CD4-positive, alpha-beta memory T cell (primary cell): ENCODE measurements at regions of chr17 and their contacts with region 1.

Region 1: GRCh38 chr17:81860756-81861518 is 602 bp upstream of the P4HB start:
- DNase-seq: peak; percentile 100
- H3K4me3 ChIP-seq: peak overlapping the region; percentile 0 to 60
- H3K4me3 Mint-ChIP-seq: peak overlapping the region; percentile 86 to 93 (median 91)
- H3K27ac ChIP-seq: peak overlapping the region; percentile 92
- H3K27ac Mint-ChIP-seq: peak overlapping the region; percentile 98 to 99 (median 98)
- H3K4me1 ChIP-seq: peaks cover 40% of the 10 kb centered on the region
- H3K4me1 Mint-ChIP-seq: peaks cover 17 to 58% (median 36%) of the 10 kb centered on the region in 4 donors
- H3K27me3 ChIP-seq: no peaks in the 10 kb centered on the region
- H3K27me3 Mint-ChIP-seq: peaks cover 0 to 6% of the 10 kb centered on the region in 2 donors

Region 2: DNA sequence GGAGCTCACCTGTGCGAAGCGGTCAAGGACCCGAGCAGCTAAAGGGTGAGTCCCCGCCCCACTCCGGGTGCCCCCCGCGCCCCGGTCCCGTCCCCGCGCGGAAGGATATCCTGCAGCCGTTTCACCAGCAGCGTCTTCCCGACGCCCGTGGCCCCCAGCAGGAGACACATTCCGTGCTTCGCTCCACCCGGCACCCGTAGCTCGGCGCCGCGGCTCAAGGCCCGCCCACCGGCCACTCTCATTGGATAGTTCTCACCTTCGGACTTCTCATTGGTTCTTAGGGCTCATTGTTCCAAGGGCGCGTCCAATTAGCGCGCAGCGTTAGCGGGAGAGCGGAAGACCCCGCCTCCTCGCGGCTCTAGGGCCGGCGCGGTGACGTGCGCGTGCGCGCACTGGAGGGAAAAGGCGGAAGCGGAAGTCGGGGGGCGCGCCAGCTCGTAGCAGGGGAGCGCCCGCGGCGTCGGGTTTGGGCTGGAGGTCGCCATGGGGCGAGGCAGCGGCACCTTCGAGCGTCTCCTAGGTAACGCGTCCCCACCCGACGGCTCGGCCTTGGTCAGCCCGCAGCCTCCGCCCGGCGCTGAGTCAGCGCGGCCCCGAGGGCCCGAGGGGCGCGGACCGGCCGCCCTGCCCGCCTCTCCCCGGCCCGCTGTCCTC is 177.2 kb before region 1 on chr17 and contains the starts of genes ARL16 and HGS:
- CTCF ChIA-PET with region 1: interaction called, 4 read pairs
- POLR2A ChIA-PET with region 1: interaction called, 10 read pairs
- intact Hi-C with region 1: no loop called
- DNase-seq: peak; percentile 97 to 98 (median 98)
- H3K4me3 ChIP-seq: peak within 1 kb of the TSS; percentile 80 to 93
- H3K4me3 Mint-ChIP-seq: peak within 1 kb of the TSS; percentile 94 to 99 (median 97)
- H3K27ac ChIP-seq: peak within 1 kb of the TSS; percentile 83
- H3K27ac Mint-ChIP-seq: peak within 1 kb of the TSS; percentile 84 to 99 (median 96)
- H3K4me1 ChIP-seq: peaks cover 31% of the 10 kb centered on the region
- H3K4me1 Mint-ChIP-seq: peaks cover 20 to 54% (median 27%) of the 10 kb centered on the region in 4 donors
- H3K27me3 ChIP-seq: no peaks in the 10 kb centered on the region
- H3K27me3 Mint-ChIP-seq: no peaks in the 10 kb centered on the region
- total RNA-seq, gene ARL16: 25.9 to 27.7 TPM
- total RNA-seq, gene HGS: 182 to 206 TPM

Region 3: DNA sequence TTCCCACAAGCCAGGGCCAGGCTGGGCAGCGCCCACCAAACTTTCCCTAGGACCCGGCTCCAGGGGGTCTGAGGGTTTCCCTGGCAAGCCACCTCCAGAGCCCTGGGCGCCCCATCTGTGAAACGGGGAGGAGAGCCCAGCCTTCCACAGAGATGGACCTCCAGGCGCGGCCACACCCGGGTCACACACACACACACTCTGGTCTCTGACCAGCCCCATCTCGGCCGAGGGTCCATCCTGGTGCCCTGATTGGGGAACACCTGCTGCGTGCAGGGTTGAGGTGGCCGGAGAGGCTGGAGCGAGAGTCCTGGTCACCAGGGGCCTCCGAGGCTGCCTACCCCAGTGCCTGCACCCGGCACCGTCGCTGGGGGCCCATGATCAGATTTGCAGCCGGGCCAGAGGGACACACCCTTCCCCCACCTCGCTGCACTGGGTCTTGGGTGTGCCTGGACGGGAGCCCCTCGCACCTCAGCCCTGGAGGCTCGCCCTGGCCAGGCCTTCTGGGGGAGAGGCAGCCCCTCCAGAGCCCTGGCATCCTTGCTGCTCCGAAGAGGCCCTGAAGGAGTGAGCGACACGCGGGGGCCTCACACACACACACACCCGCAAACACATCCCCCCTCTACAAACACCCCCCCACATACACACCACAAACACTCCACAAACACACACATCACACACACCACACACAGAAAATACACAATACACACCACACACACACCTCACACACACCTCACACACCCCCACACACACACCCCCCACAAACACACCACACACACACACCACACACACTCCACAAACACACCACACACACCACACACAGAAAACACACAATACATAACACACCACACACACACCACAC is 119.1 kb before region 1 on chr17:
- CTCF ChIA-PET with region 1: no interaction called
- POLR2A ChIA-PET with region 1: no interaction called
- intact Hi-C with region 1: no loop called
- DNase-seq: no peak
- H3K4me3 ChIP-seq: no peak overlapping the region
- H3K4me3 Mint-ChIP-seq: no peak overlapping the region
- H3K27ac ChIP-seq: no peak overlapping the region
- H3K27ac Mint-ChIP-seq: peak overlapping the region in 1 of 7 donors; percentile 35
- H3K4me1 ChIP-seq: no peaks in the 10 kb centered on the region
- H3K4me1 Mint-ChIP-seq: peaks cover 0 to 4% (median under 1%) of the 10 kb centered on the region in 4 donors
- H3K27me3 ChIP-seq: no peaks in the 10 kb centered on the region
- H3K27me3 Mint-ChIP-seq: peaks cover 5% of the 10 kb centered on the region in 2 donors

Region 4: DNA sequence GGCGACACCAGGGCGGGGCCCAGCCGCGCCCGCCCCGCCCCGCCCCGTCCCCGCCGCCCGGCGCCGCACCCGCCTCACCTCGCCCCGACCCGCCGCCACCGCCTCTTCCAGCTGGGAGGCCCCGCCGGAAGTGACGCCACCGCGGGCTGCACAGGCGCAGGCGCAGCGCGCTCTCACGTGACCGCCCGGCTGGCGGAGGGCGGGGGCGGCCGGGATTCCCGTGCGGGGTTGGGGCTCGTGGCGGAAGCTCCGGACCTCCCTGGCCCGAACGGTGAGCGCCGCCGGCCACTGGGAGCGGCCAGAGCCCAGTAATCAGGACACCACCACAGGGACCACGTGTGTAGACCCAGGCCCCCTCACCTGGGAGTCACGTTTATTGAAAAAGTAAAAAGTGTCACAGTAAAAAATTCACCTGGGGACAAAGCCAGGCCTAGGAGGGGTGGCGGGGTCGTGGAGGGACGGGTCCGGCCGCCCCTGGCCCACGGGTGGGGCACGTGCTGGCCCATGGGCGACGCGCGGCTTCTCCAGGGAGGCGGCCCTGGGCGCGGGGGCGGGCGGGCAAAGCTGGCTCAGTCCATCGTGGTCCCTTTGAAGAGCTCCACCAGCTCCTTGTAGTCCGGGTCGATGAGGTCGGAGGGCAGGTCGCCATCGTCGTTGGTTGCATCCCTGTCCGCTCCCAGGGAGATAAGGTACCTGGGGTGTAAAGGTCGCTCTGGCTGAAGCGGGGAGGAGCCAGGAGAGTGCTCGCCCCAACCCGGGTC is 27.6 kb before region 1 on chr17 and contains the start of gene MCRIP1:
- CTCF ChIA-PET with region 1: interaction called, 3 read pairs
- POLR2A ChIA-PET with region 1: interaction called, 10 read pairs
- intact Hi-C with region 1: loop called (anchors 1 kb)
- DNase-seq: peak; percentile 91 to 93 (median 92)
- H3K4me3 ChIP-seq: peak within 1 kb of the TSS; percentile 56 to 79
- H3K4me3 Mint-ChIP-seq: peak within 1 kb of the TSS; percentile 89 to 97 (median 94)
- H3K27ac ChIP-seq: peak within 1 kb of the TSS; percentile 90
- H3K27ac Mint-ChIP-seq: peak within 1 kb of the TSS; percentile 96 to 98 (median 97)
- H3K4me1 ChIP-seq: peaks cover 23% of the 10 kb centered on the region
- H3K4me1 Mint-ChIP-seq: peaks cover 10 to 31% (median 21%) of the 10 kb centered on the region in 4 donors
- H3K27me3 ChIP-seq: no peaks in the 10 kb centered on the region
- H3K27me3 Mint-ChIP-seq: no peaks in the 10 kb centered on the region
- total RNA-seq, gene MCRIP1: 65.8 to 71.0 TPM

Region 5: GRCh38 chr17:81890447-81891299 is 29.7 kb after region 1 on chr17:
- CTCF ChIA-PET with region 1: no interaction called
- POLR2A ChIA-PET with region 1: interaction called, 6 read pairs
- intact Hi-C with region 1: loop called (anchors 2 kb)
- DNase-seq: no peak
- H3K4me3 ChIP-seq: peak overlapping the region; percentile 42 to 60
- H3K4me3 Mint-ChIP-seq: peak overlapping the region; percentile 85 to 92 (median 89)
- H3K27ac ChIP-seq: peak overlapping the region; percentile 64
- H3K27ac Mint-ChIP-seq: peak overlapping the region; percentile 89 to 97 (median 96)
- H3K4me1 ChIP-seq: peaks cover 20% of the 10 kb centered on the region
- H3K4me1 Mint-ChIP-seq: peaks cover 8 to 33% (median 17%) of the 10 kb centered on the region in 4 donors
- H3K27me3 ChIP-seq: no peaks in the 10 kb centered on the region
- H3K27me3 Mint-ChIP-seq: no peaks in the 10 kb centered on the region

Region 6: GRCh38 chr17:81927653-81928543 is 67.0 kb after region 1 on chr17 and contains the start of gene MAFG:
- CTCF ChIA-PET with region 1: no interaction called
- POLR2A ChIA-PET with region 1: no interaction called
- intact Hi-C with region 1: loop called (anchors 2 kb)
- DNase-seq: peak; percentile 85 to 92 (median 90)
- H3K4me3 ChIP-seq: peak within 1 kb of the TSS; percentile 47 to 60
- H3K4me3 Mint-ChIP-seq: peak within 1 kb of the TSS; percentile 81 to 90 (median 84)
- H3K27ac ChIP-seq: peak within 1 kb of the TSS; percentile 68
- H3K27ac Mint-ChIP-seq: peak within 1 kb of the TSS; percentile 84 to 97 (median 90)
- H3K4me1 ChIP-seq: peaks cover 43% of the 10 kb centered on the region
- H3K4me1 Mint-ChIP-seq: peaks cover 12 to 27% (median 20%) of the 10 kb centered on the region in 4 donors
- H3K27me3 ChIP-seq: peaks cover 10% of the 10 kb centered on the region
- H3K27me3 Mint-ChIP-seq: peaks cover 0 to 6% of the 10 kb centered on the region in 2 donors
- total RNA-seq, gene MAFG: 16.0 to 16.3 TPM

Region 7: GRCh38 chr17:82292251-82293154 is 431.6 kb after region 1 on chr17:
- CTCF ChIA-PET with region 1: no interaction called
- POLR2A ChIA-PET with region 1: no interaction called
- intact Hi-C with region 1: loop called (anchors 10 kb)
- DNase-seq: peak; percentile 92 to 95 (median 92)
- H3K4me3 ChIP-seq: peak overlapping the region; percentile 42 to 66
- H3K4me3 Mint-ChIP-seq: peak overlapping the region; percentile 85 to 95 (median 91)
- H3K27ac ChIP-seq: peak overlapping the region; percentile 84
- H3K27ac Mint-ChIP-seq: peak overlapping the region; percentile 90 to 97 (median 95)
- H3K4me1 ChIP-seq: peaks cover 24% of the 10 kb centered on the region
- H3K4me1 Mint-ChIP-seq: peaks cover 29 to 46% (median 36%) of the 10 kb centered on the region in 4 donors
- H3K27me3 ChIP-seq: no peaks in the 10 kb centered on the region
- H3K27me3 Mint-ChIP-seq: no peaks in the 10 kb centered on the region

Region 8: GRCh38 chr17:82384730-82385481 is 524.0 kb after region 1 on chr17:
- CTCF ChIA-PET with region 1: no interaction called
- POLR2A ChIA-PET with region 1: no interaction called
- intact Hi-C with region 1: no loop called
- DNase-seq: no peak
- H3K4me3 ChIP-seq: no peak overlapping the region
- H3K4me3 Mint-ChIP-seq: no peak overlapping the region
- H3K27ac ChIP-seq: no peak overlapping the region
- H3K27ac Mint-ChIP-seq: no peak overlapping the region
- H3K4me1 ChIP-seq: no peaks in the 10 kb centered on the region
- H3K4me1 Mint-ChIP-seq: peaks cover 4 to 13% (median 7%) of the 10 kb centered on the region in 4 donors
- H3K27me3 ChIP-seq: no peaks in the 10 kb centered on the region
- H3K27me3 Mint-ChIP-seq: peaks cover 13 to 17% of the 10 kb centered on the region in 2 donors